CD8-positive, alpha-beta memory T cell (primary cell): ENCODE measurements at regions of chr11 and their contacts with region 1.

Region 1: DNA sequence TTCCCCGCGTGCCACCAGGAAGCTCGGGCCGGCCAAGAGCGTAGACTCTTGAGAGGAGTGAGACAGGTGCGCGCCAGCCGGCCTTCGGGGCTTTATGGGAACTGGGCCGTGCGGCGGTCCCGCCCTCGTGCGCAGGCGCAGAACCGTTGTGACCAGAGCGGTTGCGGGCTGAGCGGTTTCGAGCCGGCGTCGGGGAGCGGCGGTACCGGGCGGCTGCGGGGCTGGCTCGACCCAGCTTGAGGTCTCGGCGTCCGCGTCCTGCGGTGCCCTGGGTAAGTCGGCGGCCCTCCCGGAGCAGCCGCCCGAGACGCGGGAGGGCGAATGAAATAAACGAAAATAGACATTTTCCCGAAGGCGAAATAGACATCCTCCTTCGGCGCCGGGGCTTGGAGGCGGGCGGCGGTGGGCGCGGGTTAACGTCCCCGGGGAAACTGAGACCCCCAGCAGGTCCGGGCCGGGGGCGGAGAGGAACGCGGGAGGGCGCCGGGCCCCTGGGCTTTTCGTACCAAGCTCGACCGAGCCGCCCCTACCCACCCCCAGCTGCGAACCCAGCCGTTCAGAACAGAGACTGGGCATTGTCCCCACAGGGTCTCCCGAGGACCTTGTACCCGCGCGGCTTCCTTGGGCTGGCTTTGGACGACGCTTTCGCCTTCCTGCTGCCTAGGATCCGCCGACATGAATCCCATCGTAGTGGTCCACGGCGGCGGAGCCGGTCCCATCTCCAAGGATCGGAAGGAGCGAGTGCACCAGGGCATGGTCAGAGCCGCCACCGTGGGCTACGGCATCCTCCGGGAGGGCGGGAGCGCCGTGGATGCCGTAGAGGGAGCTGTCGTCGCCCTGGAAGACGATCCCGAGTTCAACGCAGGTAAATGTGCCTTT is at the start of gene ASRGL1:
- DNase-seq: peak; percentile 40 to 85 (median 72)
- H3K4me3 ChIP-seq: peak within 1 kb of the TSS; percentile 67
- H3K4me3 Mint-ChIP-seq: peak within 1 kb of the TSS; percentile 87 to 97 (median 89)
- H3K27ac ChIP-seq: no peak within 1 kb of the TSS
- H3K27ac Mint-ChIP-seq: peak within 1 kb of the TSS in 6 of 8 donors; percentile 13 to 90 (median 68)
- H3K4me1 ChIP-seq: peaks cover 4% of the 10 kb centered on the region
- H3K4me1 Mint-ChIP-seq: peaks cover 8 to 19% (median 12%) of the 10 kb centered on the region in 3 donors
- H3K27me3 ChIP-seq: peaks cover 4% of the 10 kb centered on the region
- H3K27me3 Mint-ChIP-seq: peaks cover 3 to 6% of the 10 kb centered on the region in 2 donors
- total RNA-seq, gene ASRGL1: 6.1 to 6.5 TPM

Region 2: GRCh38 chr11:62374801-62375200 is 37.3 kb after region 1 on chr11:
- CTCF ChIA-PET with region 1: interaction called, 32 read pairs
- POLR2A ChIA-PET with region 1: interaction called, 4 read pairs
- DNase-seq: no peak
- H3K4me3 ChIP-seq: no peak overlapping the region
- H3K4me3 Mint-ChIP-seq: no peak overlapping the region
- H3K27ac ChIP-seq: no peak overlapping the region
- H3K27ac Mint-ChIP-seq: no peak overlapping the region
- H3K4me1 ChIP-seq: no peaks in the 10 kb centered on the region
- H3K4me1 Mint-ChIP-seq: peaks cover 2 to 37% (median 18%) of the 10 kb centered on the region in 3 donors
- H3K27me3 ChIP-seq: no peaks in the 10 kb centered on the region
- H3K27me3 Mint-ChIP-seq: peaks cover 0 to 2% of the 10 kb centered on the region in 2 donors

Region 3: GRCh38 chr11:62444236-62444833 is 106.8 kb after region 1 on chr11:
- CTCF ChIA-PET with region 1: no interaction called
- POLR2A ChIA-PET with region 1: no interaction called
- DNase-seq: no peak
- H3K4me3 ChIP-seq: no peak overlapping the region
- H3K4me3 Mint-ChIP-seq: peak overlapping the region in 6 of 7 donors; percentile 36 to 71 (median 44)
- H3K27ac ChIP-seq: no peak overlapping the region
- H3K27ac Mint-ChIP-seq: peak overlapping the region in 2 of 8 donors; percentile 22 to 51
- H3K4me1 ChIP-seq: peaks cover 10% of the 10 kb centered on the region
- H3K4me1 Mint-ChIP-seq: peaks cover 0 to 8% (median 0%) of the 10 kb centered on the region in 3 donors
- H3K27me3 ChIP-seq: no peaks in the 10 kb centered on the region
- H3K27me3 Mint-ChIP-seq: peaks cover 18 to 38% of the 10 kb centered on the region in 2 donors